Pancreas (tissue), 10 donors: ENCODE measurements at regions of chrX and their contacts with region 1.

Region 1: DNA sequence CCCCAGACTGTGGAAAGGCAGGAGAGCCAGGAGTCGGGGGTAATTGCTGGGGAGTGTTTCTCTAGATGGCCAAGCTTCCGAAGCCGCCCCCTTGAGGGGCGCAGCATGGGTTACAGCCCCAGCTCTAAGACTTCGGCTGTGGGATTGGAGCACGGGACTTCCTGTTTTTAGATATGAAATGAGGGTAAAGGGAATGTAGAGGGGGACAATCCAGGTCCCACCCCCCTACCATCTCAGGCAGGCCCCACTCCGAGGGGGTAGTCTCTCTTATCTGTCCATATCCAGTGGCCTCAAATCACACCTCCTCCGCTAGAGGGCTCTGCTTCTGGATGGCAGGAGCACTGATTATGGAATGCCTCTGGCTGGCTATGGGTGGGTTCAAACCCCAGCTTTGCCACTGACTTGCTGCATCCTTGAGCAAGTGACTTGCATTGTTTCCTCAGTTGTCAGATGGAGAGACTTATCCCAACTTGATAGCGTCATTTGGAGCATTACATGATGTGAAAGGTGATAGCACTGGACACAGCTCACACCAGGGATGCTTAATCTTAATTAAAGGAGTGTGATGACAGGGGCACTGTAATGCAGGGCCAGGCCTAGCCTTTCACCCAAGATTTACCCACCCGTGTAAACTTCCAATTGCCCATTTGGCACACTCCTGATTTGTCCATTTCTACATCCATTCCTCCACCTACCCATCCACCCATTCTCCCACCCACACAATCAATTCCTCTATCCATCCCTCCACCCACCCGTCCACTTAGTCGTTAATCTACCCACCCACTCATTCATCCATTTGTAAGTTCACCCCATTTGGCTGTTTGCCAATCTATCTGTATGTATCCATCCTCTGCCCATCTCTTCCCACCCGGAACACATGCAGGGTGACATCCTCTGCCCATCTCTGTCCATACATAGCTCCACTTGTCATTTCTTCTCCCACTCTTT is 850 bp upstream of the KCND1 start:
- DNase-seq: peak in 2 of 6 donors; percentile 22 to 47
- ATAC-seq: peak in 3 of 4 donors; percentile 66 to 78 (median 76)
- H3K4me3 ChIP-seq: peak overlapping the region in 2 of 4 donors; percentile 5 to 23
- H3K27ac ChIP-seq: no peak overlapping the region
- H3K4me1 ChIP-seq: no peaks in the 10 kb centered on the region
- H3K27me3 ChIP-seq: no peaks in the 10 kb centered on the region
- CTCF ChIP-seq: peak in 3 of 4 donors; percentile 22 to 37 (median 26)

Region 2: GRCh38 chrX:49039598-49040375 is 67.3 kb after region 1 on chrX:
- intact Hi-C with region 1: loop called in 1 of 3 experiments (anchors 5 kb)
- DNase-seq: peak in 5 of 6 donors; percentile 46 to 72 (median 58)
- ATAC-seq: peak in 3 of 4 donors; percentile 5 to 22 (median 20)
- H3K4me3 ChIP-seq: no peak overlapping the region
- H3K27ac ChIP-seq: peak overlapping the region in 2 of 4 donors; percentile 50 to 54
- H3K4me1 ChIP-seq: peaks cover 0 to 4% (median 0%) of the 10 kb centered on the region in 3 donors
- H3K27me3 ChIP-seq: no peaks in the 10 kb centered on the region
- CTCF ChIP-seq: no peak